ENCODE measurements at regions of chr9 and their contacts with region 1.

Region 1: GRCh38 chr9:13234932-13235331 is 44.6 kb downstream of the MPDZ start:
- DNase-seq: no peak
- ATAC-seq: no peak

Region 2: GRCh38 chr9:12730927-12731326 is 504.0 kb before region 1 on chr9:
- intact Hi-C with region 1: no loop called
- DNase-seq: no peak
- ATAC-seq: no peak

Region 3: DNA sequence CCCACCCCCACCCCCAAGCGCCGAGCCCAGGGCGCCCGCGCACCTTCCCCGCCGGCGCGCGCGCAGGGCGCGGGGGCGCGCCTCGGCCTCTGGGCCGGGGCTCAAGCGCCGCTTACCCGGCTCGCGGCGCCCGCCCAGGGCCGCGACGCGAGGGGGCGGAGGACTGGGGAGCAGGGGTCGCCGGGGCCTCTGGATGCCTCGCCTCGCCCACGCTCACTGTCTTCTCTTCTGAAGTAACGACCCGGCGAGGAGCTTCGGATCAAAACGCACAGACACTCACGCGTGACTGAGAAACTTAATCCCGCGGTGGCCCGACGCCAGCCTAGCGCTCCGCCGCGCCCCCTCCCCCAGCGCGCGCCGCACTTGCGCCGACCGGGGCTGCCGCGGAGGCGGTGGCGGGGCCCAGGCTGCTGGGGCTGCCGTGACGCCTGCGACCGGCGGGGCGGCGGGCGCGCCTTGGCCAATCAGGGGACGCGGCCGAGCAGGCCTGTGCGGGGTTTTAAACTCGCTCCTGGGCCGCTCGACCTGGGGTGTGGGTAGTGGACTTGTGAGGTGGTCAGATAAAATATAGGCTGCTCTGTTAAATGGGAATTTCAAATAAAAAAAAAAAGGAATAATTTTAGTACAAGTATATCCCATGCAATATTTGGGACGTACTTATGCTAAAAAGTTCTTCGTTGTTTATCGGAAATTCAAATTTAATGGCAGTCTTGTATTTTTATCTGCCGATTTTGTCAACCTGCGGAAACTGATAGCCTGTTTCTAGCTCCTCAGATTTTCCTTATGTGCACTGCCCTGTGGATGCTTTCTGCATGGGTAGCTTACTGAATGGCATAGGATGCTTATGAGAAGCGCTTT is 44.6 kb after region 1 on chr9 and contains the start of gene MPDZ:
- intact Hi-C with region 1: loop called (anchors 5 kb)
- DNase-seq: peak; percentile 86
- ATAC-seq: peak; percentile 92
- total RNA-seq, gene MPDZ: 62.6 TPM

Measured in Right ventricle myocardium inferior (tissue), 1 donor.